ENCODE measurements at regions of chr2 and their contacts with region 1.

Region 1: GRCh38 chr2:234951664-234952269 is at the start of gene SH3BP4:
- DNase-seq: peak; percentile 89 to 91 (median 90)
- ATAC-seq: peak; percentile 80
- H3K4me3 ChIP-seq: peak within 1 kb of the TSS; percentile 61
- H3K4me1 ChIP-seq: peaks cover 47% of the 10 kb centered on the region
- CTCF ChIP-seq: no peak
- total RNA-seq, gene SH3BP4: 18.0 to 30.4 (median 29.6) TPM

Region 2: GRCh38 chr2:235050992-235051351 is 99.2 kb after region 1 on chr2:
- intact Hi-C with region 1: loop called in 1 of 2 experiments (anchors 10 kb)
- DNase-seq: peak; percentile 87 to 95 (median 88)
- ATAC-seq: peak; percentile 80
- H3K4me3 ChIP-seq: no peak overlapping the region
- H3K4me1 ChIP-seq: peaks cover 20% of the 10 kb centered on the region
- CTCF ChIP-seq: no peak

Region 3: GRCh38 chr2:235527806-235528469 is 576.2 kb after region 1 on chr2:
- intact Hi-C with region 1: no loop called
- DNase-seq: peak in 1 of 3 donors; percentile 24
- ATAC-seq: no peak
- H3K4me3 ChIP-seq: no peak overlapping the region
- H3K4me1 ChIP-seq: peaks cover 8% of the 10 kb centered on the region
- CTCF ChIP-seq: no peak